Activated CD4-positive, alpha-beta memory T cell treated with anti-CD3 and anti-CD28 coated beads for 36 hours (primary cell): ENCODE measurements at regions of chr11 and their contacts with region 1.

Region 1: GRCh38 chr11:75142714-75143419 is 8.0 kb upstream of the SLCO2B1 start:
- DNase-seq: peak; percentile 89
- H3K4me3 Mint-ChIP-seq: no peak overlapping the region
- H3K27ac Mint-ChIP-seq: peak overlapping the region; percentile 75
- H3K4me1 Mint-ChIP-seq: peaks cover 19% of the 10 kb centered on the region
- H3K27me3 Mint-ChIP-seq: peaks cover 3% of the 10 kb centered on the region

Region 2: GRCh38 chr11:75022759-75023396 is 120.0 kb before region 1 on chr11:
- CTCF ChIA-PET with region 1: interaction called, 39 read pairs
- POLR2A ChIA-PET with region 1: no interaction called
- intact Hi-C with region 1: loop called (anchors 2 kb)
- DNase-seq: peak; percentile 85
- H3K4me3 Mint-ChIP-seq: no peak overlapping the region
- H3K27ac Mint-ChIP-seq: no peak overlapping the region
- H3K4me1 Mint-ChIP-seq: no peaks in the 10 kb centered on the region
- H3K27me3 Mint-ChIP-seq: no peaks in the 10 kb centered on the region

Region 3: DNA sequence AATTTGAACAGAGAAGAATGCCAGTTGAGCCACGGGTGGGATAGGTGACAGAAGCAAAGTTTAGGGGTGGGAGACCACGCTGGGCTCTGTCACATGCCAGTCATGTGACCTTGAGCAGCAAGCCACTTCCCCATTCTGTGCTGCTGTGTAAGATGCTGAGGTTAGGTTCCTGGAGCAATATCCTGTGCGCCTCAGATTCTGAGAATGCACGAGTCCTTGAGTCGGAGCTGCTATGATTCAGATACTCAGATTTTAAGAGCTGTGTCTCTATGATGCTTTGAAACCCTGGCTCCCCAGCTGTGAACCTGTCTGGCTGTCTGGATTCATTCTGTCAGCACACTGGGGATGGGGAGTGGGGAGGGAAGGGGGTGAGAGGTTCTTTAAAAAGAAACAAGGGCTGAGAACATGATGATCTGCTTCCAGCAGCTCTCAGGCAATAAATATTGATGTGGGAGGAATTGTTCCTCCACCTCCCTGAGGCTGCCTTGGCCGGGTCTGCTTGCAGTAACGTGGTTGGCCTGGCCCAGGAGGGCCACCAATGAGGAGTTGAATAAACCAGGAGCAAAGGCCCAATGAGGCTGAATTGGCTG is 32.0 kb after region 1 on chr11:
- CTCF ChIA-PET with region 1: interaction called, 12 read pairs
- POLR2A ChIA-PET with region 1: no interaction called
- intact Hi-C with region 1: loop called (anchors 2 kb)
- DNase-seq: peak; percentile 52
- H3K4me3 Mint-ChIP-seq: no peak overlapping the region
- H3K27ac Mint-ChIP-seq: peak overlapping the region; percentile 28
- H3K4me1 Mint-ChIP-seq: peaks cover 14% of the 10 kb centered on the region
- H3K27me3 Mint-ChIP-seq: no peaks in the 10 kb centered on the region

Region 4: GRCh38 chr11:75204685-75205563 is 62.1 kb after region 1 on chr11:
- CTCF ChIA-PET with region 1: interaction called, 559 read pairs
- POLR2A ChIA-PET with region 1: interaction called, 4 read pairs
- intact Hi-C with region 1: loop called (anchors 1 kb)
- DNase-seq: peak; percentile 90
- H3K4me3 Mint-ChIP-seq: no peak overlapping the region
- H3K27ac Mint-ChIP-seq: no peak overlapping the region
- H3K4me1 Mint-ChIP-seq: no peaks in the 10 kb centered on the region
- H3K27me3 Mint-ChIP-seq: no peaks in the 10 kb centered on the region

Region 5: GRCh38 chr11:75241036-75241905 is 98.4 kb after region 1 on chr11:
- CTCF ChIA-PET with region 1: interaction called, 365 read pairs
- POLR2A ChIA-PET with region 1: interaction called, 3 read pairs
- intact Hi-C with region 1: no loop called
- DNase-seq: peak; percentile 91
- H3K4me3 Mint-ChIP-seq: peak overlapping the region; percentile 69
- H3K27ac Mint-ChIP-seq: no peak overlapping the region
- H3K4me1 Mint-ChIP-seq: peaks cover 7% of the 10 kb centered on the region
- H3K27me3 Mint-ChIP-seq: peaks cover 29% of the 10 kb centered on the region

Region 6: GRCh38 chr11:75340050-75340409 is 197.2 kb after region 1 on chr11:
- CTCF ChIA-PET with region 1: no interaction called
- POLR2A ChIA-PET with region 1: no interaction called
- intact Hi-C with region 1: no loop called
- DNase-seq: no peak
- H3K4me3 Mint-ChIP-seq: no peak overlapping the region
- H3K27ac Mint-ChIP-seq: peak overlapping the region; percentile 89
- H3K4me1 Mint-ChIP-seq: peaks cover 79% of the 10 kb centered on the region
- H3K27me3 Mint-ChIP-seq: no peaks in the 10 kb centered on the region